Natural killer cell (primary cell): ENCODE measurements at regions of chr11 and their contacts with region 1.

Region 1: DNA sequence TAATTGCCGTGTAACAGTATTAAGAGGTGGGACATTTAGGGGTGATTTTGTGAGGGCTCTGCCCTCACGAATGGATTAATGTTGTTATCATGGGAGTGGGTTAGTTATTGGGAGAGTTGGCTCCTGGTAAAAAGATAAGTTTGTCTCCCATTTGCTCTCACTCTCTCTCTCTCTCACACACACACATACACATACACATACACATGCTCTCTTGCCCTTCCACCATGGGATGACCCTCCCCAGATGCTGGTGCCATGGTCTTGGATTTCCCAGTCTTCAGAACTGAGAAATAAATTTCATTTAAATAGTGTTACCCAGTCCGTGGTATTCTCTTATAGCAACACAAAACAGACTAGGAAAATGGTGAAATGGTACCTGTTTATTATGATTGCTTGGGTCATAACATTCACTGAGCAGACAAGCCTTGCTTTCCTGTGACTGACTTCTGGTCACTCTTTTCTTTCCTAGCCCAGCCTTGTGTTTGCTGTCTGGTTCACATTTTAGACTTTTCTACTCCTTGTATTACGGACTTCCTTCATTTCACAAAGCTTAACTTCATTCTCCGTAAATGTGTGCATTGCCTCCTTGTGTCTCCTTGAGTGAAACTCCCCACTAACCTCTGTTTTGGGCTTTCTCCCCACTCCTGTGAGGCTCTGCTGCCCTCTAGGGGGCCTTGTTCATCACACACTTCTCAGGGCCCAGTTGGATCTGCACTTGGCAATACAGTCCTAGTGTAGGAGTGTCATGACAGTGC is 206.5 kb upstream of the CTSC start:
- DNase-seq: peak; percentile 70 to 86
- ATAC-seq: peak; percentile 93 to 100 (median 99)
- H3K4me3 ChIP-seq: no peak overlapping the region
- H3K4me3 Mint-ChIP-seq: peak overlapping the region; percentile 2
- H3K27ac ChIP-seq: no peak overlapping the region
- H3K27ac Mint-ChIP-seq: peak overlapping the region in 1 of 2 donors; percentile 56
- H3K4me1 ChIP-seq: peaks cover 3% of the 10 kb centered on the region
- H3K4me1 Mint-ChIP-seq: peaks cover 6 to 8% of the 10 kb centered on the region in 2 donors
- H3K27me3 ChIP-seq: no peaks in the 10 kb centered on the region
- H3K27me3 Mint-ChIP-seq: peaks cover 3 to 4% of the 10 kb centered on the region in 2 donors
- CTCF ChIP-seq: peak; percentile 93

Region 2: DNA sequence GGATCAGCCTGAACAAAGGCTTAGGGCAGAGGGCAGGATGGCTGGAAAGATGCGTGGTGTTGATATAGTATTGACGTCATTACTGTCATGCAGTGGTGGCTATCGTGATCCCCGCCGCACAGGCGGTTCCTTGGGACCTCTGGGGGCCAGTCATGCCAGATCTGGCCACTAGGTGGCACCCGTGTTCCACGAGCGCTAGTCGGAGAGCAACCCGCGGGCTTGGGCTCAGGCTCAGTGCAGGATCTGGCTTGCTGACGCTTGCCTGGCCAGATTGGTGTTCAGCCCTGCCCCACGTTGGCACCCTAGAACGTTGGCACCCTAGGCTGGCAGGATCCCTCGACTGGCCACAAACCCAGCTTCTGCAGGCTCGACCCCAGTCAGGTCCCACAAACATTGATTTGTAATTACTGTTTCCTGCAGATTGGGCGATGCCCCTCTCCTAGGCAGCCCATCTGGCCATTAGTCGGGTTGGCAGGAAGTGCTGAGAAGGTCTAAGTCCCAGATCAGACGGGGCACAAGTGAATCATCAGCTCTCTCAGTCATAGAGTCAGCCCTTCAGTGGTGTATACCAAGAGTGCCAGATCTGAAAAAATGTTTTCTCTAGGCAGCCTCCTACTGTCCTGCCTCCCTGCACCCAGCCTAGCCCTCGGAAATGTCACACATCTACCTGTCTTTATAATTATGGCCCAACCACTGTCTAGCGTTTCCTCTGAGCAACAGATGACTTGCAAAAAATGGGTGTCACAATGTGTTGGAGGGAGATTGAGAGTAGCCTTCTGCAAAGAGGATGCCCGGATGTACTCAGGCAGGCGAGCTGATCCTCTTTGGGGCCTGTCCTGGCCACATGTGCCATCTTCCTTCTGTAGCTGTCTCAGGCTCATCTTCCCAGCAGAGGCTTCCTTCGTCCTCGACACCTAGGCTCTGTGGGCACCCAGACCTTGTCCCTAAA is 1191.0 kb before region 1 on chr11:
- intact Hi-C with region 1: loop called (anchors 2 kb)
- DNase-seq: peak; percentile 82 to 86
- ATAC-seq: peak; percentile 95 to 98 (median 95)
- H3K4me3 ChIP-seq: no peak overlapping the region
- H3K4me3 Mint-ChIP-seq: no peak overlapping the region
- H3K27ac ChIP-seq: no peak overlapping the region
- H3K27ac Mint-ChIP-seq: peak overlapping the region in 1 of 2 donors; percentile 25
- H3K4me1 ChIP-seq: peaks cover 8% of the 10 kb centered on the region
- H3K4me1 Mint-ChIP-seq: peaks cover 0 to 14% of the 10 kb centered on the region in 2 donors
- H3K27me3 ChIP-seq: no peaks in the 10 kb centered on the region
- H3K27me3 Mint-ChIP-seq: no peaks in the 10 kb centered on the region
- CTCF ChIP-seq: peak; percentile 92

Region 3: DNA sequence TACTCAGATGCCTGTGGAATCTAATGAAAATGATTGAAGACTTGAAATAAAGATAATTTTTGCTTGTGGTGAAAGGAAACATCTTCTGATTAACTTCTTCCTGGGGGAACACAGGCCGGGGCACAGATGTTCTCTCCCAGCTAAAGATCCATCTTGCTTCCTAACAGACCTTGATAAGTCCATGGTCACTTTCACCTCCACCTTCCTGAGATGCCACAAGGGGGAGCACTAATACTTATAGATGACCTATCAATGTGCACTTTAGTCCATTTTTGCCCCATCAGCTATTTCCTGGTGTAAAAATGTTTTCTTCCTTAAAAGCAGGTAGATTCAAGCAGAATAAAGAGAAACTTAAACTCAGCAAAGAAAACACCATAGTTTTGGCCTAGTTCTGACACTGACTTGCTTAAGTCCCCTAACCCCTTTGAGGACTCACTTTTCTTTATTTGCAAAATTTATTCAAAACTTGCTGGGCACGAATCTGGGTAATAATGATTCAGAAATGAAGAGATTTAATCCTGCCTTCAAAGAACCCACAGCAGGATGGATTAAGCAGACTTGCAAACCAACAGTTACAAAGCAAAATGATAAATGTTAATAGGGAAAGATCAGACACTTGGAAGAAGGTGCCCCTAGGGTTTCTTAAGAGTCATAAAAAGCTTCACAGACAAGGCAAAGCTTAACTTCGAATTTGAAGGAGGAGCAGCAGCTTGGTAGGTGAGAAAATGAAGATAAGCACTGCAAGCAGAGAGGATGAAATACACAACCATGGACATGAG is 527.5 kb before region 1 on chr11:
- intact Hi-C with region 1: loop called (anchors 1 kb)
- DNase-seq: peak in 1 of 2 donors; percentile 77
- ATAC-seq: peak; percentile 57 to 76 (median 70)
- H3K4me3 ChIP-seq: no peak overlapping the region
- H3K4me3 Mint-ChIP-seq: no peak overlapping the region
- H3K27ac ChIP-seq: no peak overlapping the region
- H3K27ac Mint-ChIP-seq: no peak overlapping the region
- H3K4me1 ChIP-seq: no peaks in the 10 kb centered on the region
- H3K4me1 Mint-ChIP-seq: no peaks in the 10 kb centered on the region
- H3K27me3 ChIP-seq: peaks cover 2% of the 10 kb centered on the region
- H3K27me3 Mint-ChIP-seq: peaks cover 0 to 6% of the 10 kb centered on the region in 2 donors
- CTCF ChIP-seq: peak; percentile 80

Region 4: GRCh38 chr11:88103337-88104206 is 440.5 kb before region 1 on chr11:
- intact Hi-C with region 1: loop called (anchors 1 kb)
- DNase-seq: peak in 1 of 2 donors; percentile 65
- ATAC-seq: peak; percentile 54 to 81 (median 72)
- H3K4me3 ChIP-seq: no peak overlapping the region
- H3K4me3 Mint-ChIP-seq: no peak overlapping the region
- H3K27ac ChIP-seq: no peak overlapping the region
- H3K27ac Mint-ChIP-seq: no peak overlapping the region
- H3K4me1 ChIP-seq: no peaks in the 10 kb centered on the region
- H3K4me1 Mint-ChIP-seq: no peaks in the 10 kb centered on the region
- H3K27me3 ChIP-seq: no peaks in the 10 kb centered on the region
- H3K27me3 Mint-ChIP-seq: no peaks in the 10 kb centered on the region
- CTCF ChIP-seq: peak; percentile 36

Region 5: GRCh38 chr11:88231894-88232482 is 312.1 kb before region 1 on chr11:
- intact Hi-C with region 1: loop called (anchors 1 kb)
- DNase-seq: peak in 1 of 2 donors; percentile 60
- ATAC-seq: peak; percentile 43 to 76 (median 72)
- H3K4me3 ChIP-seq: no peak overlapping the region
- H3K4me3 Mint-ChIP-seq: no peak overlapping the region
- H3K27ac ChIP-seq: no peak overlapping the region
- H3K27ac Mint-ChIP-seq: no peak overlapping the region
- H3K4me1 ChIP-seq: no peaks in the 10 kb centered on the region
- H3K4me1 Mint-ChIP-seq: peaks cover 10 to 12% of the 10 kb centered on the region in 2 donors
- H3K27me3 ChIP-seq: no peaks in the 10 kb centered on the region
- H3K27me3 Mint-ChIP-seq: no peaks in the 10 kb centered on the region
- CTCF ChIP-seq: peak; percentile 73

Region 6: GRCh38 chr11:88886796-88887195 is 342.7 kb after region 1 on chr11:
- intact Hi-C with region 1: loop called (anchors 10 kb)
- DNase-seq: peak in 1 of 2 donors; percentile 68
- ATAC-seq: no peak
- H3K4me3 ChIP-seq: no peak overlapping the region
- H3K4me3 Mint-ChIP-seq: no peak overlapping the region
- H3K27ac ChIP-seq: no peak overlapping the region
- H3K27ac Mint-ChIP-seq: no peak overlapping the region
- H3K4me1 ChIP-seq: no peaks in the 10 kb centered on the region
- H3K4me1 Mint-ChIP-seq: no peaks in the 10 kb centered on the region
- H3K27me3 ChIP-seq: no peaks in the 10 kb centered on the region
- H3K27me3 Mint-ChIP-seq: no peaks in the 10 kb centered on the region
- CTCF ChIP-seq: peak; percentile 43